Colonic mucosa (tissue), 4 donors: ENCODE measurements at regions of chr14 and their contacts with region 1.

Region 1: GRCh38 chr14:78448164-78449094 is 278.3 kb downstream of the NRXN3 start:
- DNase-seq: peak; percentile 57
- H3K4me3 ChIP-seq: no peak overlapping the region
- H3K27ac ChIP-seq: no peak overlapping the region
- H3K4me1 ChIP-seq: no peaks in the 10 kb centered on the region
- H3K27me3 ChIP-seq: no peaks in the 10 kb centered on the region
- CTCF ChIP-seq: peak; percentile 52

Region 2: DNA sequence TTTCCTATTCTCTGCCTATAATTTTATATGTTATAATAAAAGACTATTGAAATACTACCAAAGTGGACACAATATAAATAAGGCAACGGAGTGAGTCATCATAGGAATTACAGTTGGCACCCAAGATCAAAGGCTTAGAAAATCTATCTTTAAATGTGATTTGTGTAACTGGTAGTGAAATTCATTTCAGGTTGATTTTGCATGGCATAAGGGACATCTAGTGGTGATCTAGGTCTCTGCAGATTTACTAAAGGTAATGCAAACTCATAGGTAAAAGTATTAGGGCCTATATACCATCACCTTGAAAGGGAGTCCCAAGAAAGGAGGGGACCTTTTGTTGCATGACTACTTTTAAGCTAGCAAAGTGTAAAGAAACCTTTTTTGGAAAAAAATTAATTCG is 248.9 kb after region 1 on chr14:
- intact Hi-C with region 1: loop called (anchors 5 kb)
- DNase-seq: no peak
- H3K4me3 ChIP-seq: no peak overlapping the region
- H3K27ac ChIP-seq: no peak overlapping the region
- H3K4me1 ChIP-seq: no peaks in the 10 kb centered on the region
- H3K27me3 ChIP-seq: no peaks in the 10 kb centered on the region
- CTCF ChIP-seq: peak; percentile 50

Region 3: DNA sequence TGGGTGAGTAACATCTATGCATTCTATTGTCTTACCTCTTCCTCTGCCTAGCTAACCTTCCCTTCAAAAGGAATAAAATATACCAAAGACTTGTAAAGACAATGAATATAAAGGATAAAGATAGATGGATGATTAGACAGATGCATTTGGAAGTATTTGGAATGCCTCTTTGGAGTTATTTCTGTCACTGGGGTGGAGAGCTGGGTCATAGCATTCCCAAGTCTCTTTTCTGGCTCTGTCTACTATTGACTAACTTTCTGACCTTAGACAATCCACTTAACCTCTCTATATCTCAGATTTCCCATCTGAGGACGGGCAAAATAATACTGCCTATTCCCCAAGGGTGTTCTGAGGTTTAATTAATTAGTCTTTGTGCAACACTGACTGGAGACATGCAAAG is 1245.5 kb after region 1 on chr14:
- intact Hi-C with region 1: no loop called
- DNase-seq: no peak
- H3K4me3 ChIP-seq: no peak overlapping the region
- H3K27ac ChIP-seq: no peak overlapping the region
- H3K4me1 ChIP-seq: no peaks in the 10 kb centered on the region
- H3K27me3 ChIP-seq: no peaks in the 10 kb centered on the region
- CTCF ChIP-seq: no peak